Activated CD4-positive, alpha-beta memory T cell treated with anti-CD3 and anti-CD28 coated beads, Interleukin-2, amount 10 ng/mL, durations not matched to agents 7 days and 5 days (primary cell): ENCODE measurements at regions of chr11 and their contacts with region 1.

Region 1: GRCh38 chr11:67317205-67317887 is 14.0 kb downstream of the SSH3 start:
- DNase-seq: peak; percentile 99
- H3K4me3 Mint-ChIP-seq: peak overlapping the region; percentile 83
- H3K27ac Mint-ChIP-seq: peak overlapping the region; percentile 96
- H3K4me1 Mint-ChIP-seq: peaks cover 44% of the 10 kb centered on the region
- H3K27me3 Mint-ChIP-seq: no peaks in the 10 kb centered on the region

Region 2: GRCh38 chr11:67252831-67253239 is 64.5 kb before region 1 on chr11:
- CTCF ChIA-PET with region 1: interaction called, 36 read pairs
- POLR2A ChIA-PET with region 1: interaction called, 7 read pairs
- DNase-seq: peak; percentile 54
- H3K4me3 Mint-ChIP-seq: no peak overlapping the region
- H3K27ac Mint-ChIP-seq: peak overlapping the region; percentile 81
- H3K4me1 Mint-ChIP-seq: peaks cover 47% of the 10 kb centered on the region
- H3K27me3 Mint-ChIP-seq: no peaks in the 10 kb centered on the region

Region 3: DNA sequence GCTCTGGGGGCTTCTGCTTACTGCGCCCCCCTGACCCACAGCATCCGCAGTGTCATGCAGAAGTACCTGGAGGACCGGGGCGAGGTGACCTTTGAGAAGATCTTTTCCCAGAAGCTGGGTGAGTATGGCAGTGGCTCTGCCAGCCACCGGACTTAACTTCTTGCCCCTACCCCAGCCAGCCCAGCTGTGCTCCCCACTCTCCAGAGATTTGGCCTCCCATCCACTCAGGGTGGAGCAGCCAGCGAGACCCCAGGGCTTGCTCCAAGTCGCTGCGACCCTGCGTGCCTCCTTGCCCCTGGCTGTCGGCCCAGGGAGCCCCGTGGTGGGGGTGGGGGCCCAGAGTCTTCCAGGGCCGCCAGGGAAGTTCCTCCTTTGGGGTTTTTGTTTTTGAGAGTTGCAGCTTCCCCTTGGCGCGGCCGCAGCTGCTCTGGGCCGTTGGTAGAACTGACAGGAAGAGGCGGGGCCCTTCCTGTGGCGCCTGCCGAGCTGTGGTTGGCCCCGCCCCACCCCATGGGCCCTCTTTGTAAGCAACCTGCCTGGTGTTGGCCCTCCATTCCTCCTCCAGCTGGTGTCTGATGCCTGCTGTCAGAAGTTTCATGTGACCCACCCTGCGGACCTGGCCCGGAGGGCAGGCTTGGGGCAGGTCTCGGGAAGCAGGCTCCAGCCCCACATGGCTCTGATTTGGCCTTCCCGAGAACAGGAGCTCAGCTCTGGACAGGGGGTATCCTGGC is 40.0 kb before region 1 on chr11:
- CTCF ChIA-PET with region 1: interaction called, 27 read pairs
- POLR2A ChIA-PET with region 1: interaction called, 31 read pairs
- DNase-seq: peak; percentile 94
- H3K4me3 Mint-ChIP-seq: peak overlapping the region; percentile 77
- H3K27ac Mint-ChIP-seq: peak overlapping the region; percentile 93
- H3K4me1 Mint-ChIP-seq: peaks cover 80% of the 10 kb centered on the region
- H3K27me3 Mint-ChIP-seq: no peaks in the 10 kb centered on the region

Region 4: GRCh38 chr11:67288452-67289225 is 28.7 kb before region 1 on chr11:
- CTCF ChIA-PET with region 1: interaction called, 16 read pairs
- POLR2A ChIA-PET with region 1: interaction called, 53 read pairs
- DNase-seq: peak; percentile 94
- H3K4me3 Mint-ChIP-seq: peak overlapping the region; percentile 74
- H3K27ac Mint-ChIP-seq: peak overlapping the region; percentile 99
- H3K4me1 Mint-ChIP-seq: peaks cover 76% of the 10 kb centered on the region
- H3K27me3 Mint-ChIP-seq: no peaks in the 10 kb centered on the region

Region 5: DNA sequence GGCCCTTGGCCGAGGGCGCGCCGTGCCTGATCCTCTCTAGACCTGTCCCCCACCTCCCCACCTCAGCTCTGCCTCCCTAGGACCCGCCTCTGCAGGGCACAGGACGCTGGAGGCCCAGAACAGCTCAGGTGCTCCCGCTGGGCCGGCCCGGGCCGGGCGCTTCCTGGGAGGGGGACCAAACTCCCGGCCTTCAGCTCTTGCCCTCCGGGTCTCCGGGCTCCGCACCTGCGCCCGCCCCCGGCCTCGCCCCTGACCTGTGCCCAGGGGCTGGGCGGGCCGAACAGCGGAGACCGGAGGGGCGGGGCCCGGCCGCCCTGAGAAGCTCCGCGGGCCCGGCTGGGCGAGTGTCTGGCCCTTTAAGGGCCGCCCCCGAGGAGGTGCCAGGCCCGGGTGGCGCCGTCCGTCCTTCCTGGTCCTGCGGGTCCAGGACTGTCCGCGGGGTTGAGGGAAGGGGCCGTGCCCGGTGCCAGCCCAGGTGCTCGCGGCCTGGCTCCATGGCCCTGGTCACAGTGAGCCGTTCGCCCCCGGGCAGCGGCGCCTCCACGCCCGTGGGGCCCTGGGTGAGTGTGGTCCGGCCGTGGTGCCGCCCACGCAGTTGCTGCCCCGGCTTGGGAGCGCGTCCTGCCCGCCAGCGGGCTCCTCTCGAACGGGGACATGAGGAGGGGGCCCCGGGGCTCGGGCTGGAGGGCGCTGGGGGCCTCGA is 14.1 kb before region 1 on chr11 and contains the start of gene SSH3:
- CTCF ChIA-PET with region 1: interaction called, 13 read pairs
- POLR2A ChIA-PET with region 1: interaction called, 17 read pairs
- DNase-seq: peak; percentile 60
- H3K4me3 Mint-ChIP-seq: peak within 1 kb of the TSS; percentile 68
- H3K27ac Mint-ChIP-seq: no peak within 1 kb of the TSS
- H3K4me1 Mint-ChIP-seq: peaks cover 18% of the 10 kb centered on the region
- H3K27me3 Mint-ChIP-seq: no peaks in the 10 kb centered on the region
- total RNA-seq, gene SSH3: 15.4 to 19.0 TPM

Region 6: GRCh38 chr11:67439321-67439883 is 122.1 kb after region 1 on chr11:
- CTCF ChIA-PET with region 1: no interaction called
- POLR2A ChIA-PET with region 1: no interaction called
- DNase-seq: peak; percentile 54
- H3K4me3 Mint-ChIP-seq: peak overlapping the region; percentile 94
- H3K27ac Mint-ChIP-seq: peak overlapping the region; percentile 97
- H3K4me1 Mint-ChIP-seq: peaks cover 62% of the 10 kb centered on the region
- H3K27me3 Mint-ChIP-seq: no peaks in the 10 kb centered on the region